Lower lobe of right lung (tissue), 2 donors: ENCODE measurements at regions of chr20 and their contacts with region 1.

Region 1: DNA sequence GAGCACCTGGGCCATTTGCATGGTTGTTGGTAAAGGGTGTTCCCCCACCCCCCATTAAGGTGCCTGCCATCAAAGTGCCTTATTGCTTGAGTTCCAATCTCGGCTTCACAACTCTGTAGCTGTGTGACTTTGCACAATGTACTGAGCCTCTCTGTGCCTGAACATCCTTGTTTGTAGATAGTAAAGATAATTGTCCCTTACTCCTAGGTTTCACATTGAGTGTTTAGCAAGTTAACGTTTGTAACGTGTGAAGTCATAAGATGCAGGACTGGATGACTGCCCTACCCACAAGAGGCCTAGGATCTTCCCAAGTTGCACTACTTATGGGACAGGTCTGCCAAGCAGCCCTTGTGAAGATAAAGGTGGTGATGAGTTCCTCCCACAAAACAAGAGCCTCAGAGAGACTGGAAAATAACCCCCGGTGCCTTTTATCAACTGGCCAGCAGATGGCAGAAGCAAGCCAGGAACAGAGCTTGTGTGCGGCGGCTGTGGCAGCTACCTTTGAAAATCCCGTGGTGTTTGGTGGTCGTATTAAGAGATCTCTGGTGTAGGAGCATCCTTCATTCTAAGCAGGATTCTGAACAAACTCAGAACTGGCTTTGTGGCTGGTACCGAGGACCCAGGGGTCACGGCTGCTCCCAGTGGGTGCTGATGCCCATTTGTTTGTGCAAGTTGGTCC is 99.0 kb downstream of the CDH26 start:
- DNase-seq: peak; percentile 69
- ATAC-seq: peak; percentile 48 to 73
- H3K4me3 ChIP-seq: no peak overlapping the region
- H3K27ac ChIP-seq: peak overlapping the region; percentile 70
- H3K4me1 ChIP-seq: peaks cover 55% of the 10 kb centered on the region
- H3K27me3 ChIP-seq: no peaks in the 10 kb centered on the region
- CTCF ChIP-seq: peak; percentile 88

Region 2: GRCh38 chr20:60262967-60263603 is 205.8 kb after region 1 on chr20:
- intact Hi-C with region 1: loop called (anchors 5 kb)
- DNase-seq: peak; percentile 60
- ATAC-seq: peak in 1 of 2 donors; percentile 67
- H3K4me3 ChIP-seq: no peak overlapping the region
- H3K27ac ChIP-seq: no peak overlapping the region
- H3K4me1 ChIP-seq: no peaks in the 10 kb centered on the region
- H3K27me3 ChIP-seq: peaks cover 9% of the 10 kb centered on the region
- CTCF ChIP-seq: peak; percentile 72